ENCODE measurements at regions of chr2 and their contacts with region 1.

Region 1: DNA sequence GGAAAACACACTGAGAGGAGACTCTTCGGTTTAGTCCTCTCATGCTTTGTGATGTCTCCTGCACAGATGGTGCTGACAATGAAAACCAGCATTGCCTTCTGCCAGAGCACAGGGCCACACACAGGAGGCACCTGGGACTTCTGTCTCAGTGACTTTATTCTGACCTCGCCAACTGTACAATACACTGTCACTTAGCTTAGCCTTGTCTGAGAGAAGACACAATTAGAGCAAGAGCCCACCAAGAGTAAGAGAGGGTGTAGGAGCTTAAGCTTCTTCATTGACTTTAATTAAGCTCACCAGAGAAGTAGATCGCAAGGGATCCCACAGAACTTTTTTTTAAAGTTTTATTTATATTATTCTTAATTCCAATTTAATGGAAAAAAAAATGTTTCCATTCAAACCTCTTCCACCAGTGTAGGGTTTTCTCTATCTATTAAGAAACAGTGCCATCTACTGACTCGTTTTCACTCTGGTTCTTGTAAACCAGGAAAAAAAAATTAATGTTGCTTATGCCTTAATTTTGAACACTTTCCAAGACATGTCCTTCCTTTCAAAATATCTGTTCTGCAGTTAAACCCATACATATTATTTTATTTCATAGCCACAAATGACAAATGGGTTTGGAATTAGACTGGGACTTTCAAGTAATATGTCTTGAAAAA is 42.4 kb upstream of the DDX18 start:
- DNase-seq: peak in 1 of 2 experiments; percentile 30
- H3K4me3 ChIP-seq: no peak overlapping the region
- H3K4me3 Mint-ChIP-seq: no peak overlapping the region
- H3K27ac Mint-ChIP-seq: no peak overlapping the region
- H3K4me1 ChIP-seq: no peaks in the 10 kb centered on the region
- H3K4me1 Mint-ChIP-seq: no peaks in the 10 kb centered on the region
- H3K27me3 ChIP-seq: no peaks in the 10 kb centered on the region
- H3K27me3 Mint-ChIP-seq: peaks cover 2% of the 10 kb centered on the region
- CTCF ChIP-seq: peak; percentile 51 to 67

Region 2: GRCh38 chr2:116747103-116747502 is 1025.0 kb before region 1 on chr2:
- CTCF ChIA-PET with region 1: no interaction called
- POLR2A ChIA-PET with region 1: no interaction called
- intact Hi-C with region 1: loop called (anchors 5 kb)
- DNase-seq: no peak
- H3K4me3 ChIP-seq: no peak overlapping the region
- H3K4me3 Mint-ChIP-seq: no peak overlapping the region
- H3K27ac Mint-ChIP-seq: no peak overlapping the region
- H3K4me1 ChIP-seq: no peaks in the 10 kb centered on the region
- H3K4me1 Mint-ChIP-seq: no peaks in the 10 kb centered on the region
- H3K27me3 ChIP-seq: no peaks in the 10 kb centered on the region
- H3K27me3 Mint-ChIP-seq: no peaks in the 10 kb centered on the region
- CTCF ChIP-seq: peak in 1 of 2 experiments; percentile 12

Region 3: GRCh38 chr2:117411977-117412376 is 360.1 kb before region 1 on chr2:
- CTCF ChIA-PET with region 1: no interaction called
- POLR2A ChIA-PET with region 1: no interaction called
- intact Hi-C with region 1: loop called (anchors 1 kb)
- DNase-seq: peak in 1 of 2 experiments; percentile 9
- H3K4me3 ChIP-seq: no peak overlapping the region
- H3K4me3 Mint-ChIP-seq: no peak overlapping the region
- H3K27ac Mint-ChIP-seq: no peak overlapping the region
- H3K4me1 ChIP-seq: no peaks in the 10 kb centered on the region
- H3K4me1 Mint-ChIP-seq: no peaks in the 10 kb centered on the region
- H3K27me3 ChIP-seq: no peaks in the 10 kb centered on the region
- H3K27me3 Mint-ChIP-seq: peaks cover 7% of the 10 kb centered on the region
- CTCF ChIP-seq: peak; percentile 30 to 36

Region 4: GRCh38 chr2:117536139-117536538 is 236.0 kb before region 1 on chr2:
- CTCF ChIA-PET with region 1: no interaction called
- POLR2A ChIA-PET with region 1: no interaction called
- intact Hi-C with region 1: loop called (anchors 5 kb)
- DNase-seq: peak in 1 of 2 experiments; percentile 25
- H3K4me3 ChIP-seq: no peak overlapping the region
- H3K4me3 Mint-ChIP-seq: no peak overlapping the region
- H3K27ac Mint-ChIP-seq: no peak overlapping the region
- H3K4me1 ChIP-seq: no peaks in the 10 kb centered on the region
- H3K4me1 Mint-ChIP-seq: no peaks in the 10 kb centered on the region
- H3K27me3 ChIP-seq: no peaks in the 10 kb centered on the region
- H3K27me3 Mint-ChIP-seq: no peaks in the 10 kb centered on the region
- CTCF ChIP-seq: peak; percentile 38 to 49

Measured in Caco-2 (cell line).